ENCODE measurements at regions of chr7 and their contacts with region 1.

Region 1: GRCh38 chr7:6516387-6516983 is 34.8 kb downstream of the GRID2IP start:
- DNase-seq: peak; percentile 79
- H3K4me3 Mint-ChIP-seq: peak overlapping the region; percentile 61
- H3K27ac Mint-ChIP-seq: no peak overlapping the region
- H3K4me1 Mint-ChIP-seq: peaks cover 6% of the 10 kb centered on the region
- H3K27me3 Mint-ChIP-seq: no peaks in the 10 kb centered on the region

Region 2: GRCh38 chr7:6250364-6250833 is 266.1 kb before region 1 on chr7:
- CTCF ChIA-PET with region 1: no interaction called
- POLR2A ChIA-PET with region 1: no interaction called
- intact Hi-C with region 1: no loop called
- DNase-seq: peak; percentile 71
- H3K4me3 Mint-ChIP-seq: no peak overlapping the region
- H3K27ac Mint-ChIP-seq: peak overlapping the region; percentile 63
- H3K4me1 Mint-ChIP-seq: peaks cover 24% of the 10 kb centered on the region
- H3K27me3 Mint-ChIP-seq: peaks cover 28% of the 10 kb centered on the region

Region 3: DNA sequence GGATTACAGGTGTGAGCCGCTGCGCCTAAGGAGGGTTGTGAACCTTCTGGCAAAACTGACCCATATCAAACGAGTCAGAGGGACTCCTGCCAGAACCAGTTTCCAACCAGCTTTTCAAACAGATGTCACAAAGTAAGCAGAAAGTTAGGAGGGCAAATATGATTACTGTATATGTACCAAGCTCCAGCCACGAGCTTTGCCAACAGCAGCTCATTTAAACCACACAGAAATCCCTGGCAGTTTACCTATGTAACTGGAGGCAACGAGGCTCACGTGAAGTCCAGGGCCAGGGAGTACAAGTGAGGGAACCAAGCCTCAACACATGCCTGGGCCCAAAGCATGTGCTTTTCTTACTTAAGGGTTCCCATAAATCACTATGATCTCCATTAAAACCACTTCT is 56.2 kb before region 1 on chr7:
- CTCF ChIA-PET with region 1: no interaction called
- POLR2A ChIA-PET with region 1: no interaction called
- intact Hi-C with region 1: no loop called
- DNase-seq: no peak
- H3K4me3 Mint-ChIP-seq: no peak overlapping the region
- H3K27ac Mint-ChIP-seq: no peak overlapping the region
- H3K4me1 Mint-ChIP-seq: no peaks in the 10 kb centered on the region
- H3K27me3 Mint-ChIP-seq: no peaks in the 10 kb centered on the region

Region 4: DNA sequence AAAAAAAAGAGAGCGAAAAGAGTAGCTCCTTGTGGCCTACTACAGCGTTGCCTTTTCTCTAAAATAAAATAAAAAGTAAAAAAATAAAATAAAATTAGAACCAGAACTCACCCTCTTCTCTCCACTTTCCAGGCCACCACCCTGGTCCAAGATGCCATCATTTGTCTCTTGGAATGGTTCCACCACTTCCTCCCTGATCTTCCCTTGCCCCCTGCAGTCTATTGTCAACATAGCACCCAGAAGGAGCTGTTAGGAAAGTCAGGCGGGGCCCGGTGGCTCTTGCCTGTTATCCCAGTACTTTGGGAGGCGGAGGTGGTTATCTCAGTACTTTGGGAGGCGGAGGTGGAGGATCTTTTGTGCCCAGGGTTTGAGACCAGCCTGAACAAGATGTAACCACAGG is 42.4 kb after region 1 on chr7:
- CTCF ChIA-PET with region 1: interaction called, 24 read pairs
- POLR2A ChIA-PET with region 1: no interaction called
- intact Hi-C with region 1: loop called (anchors 1 kb)
- DNase-seq: peak; percentile 41
- H3K4me3 Mint-ChIP-seq: no peak overlapping the region
- H3K27ac Mint-ChIP-seq: no peak overlapping the region
- H3K4me1 Mint-ChIP-seq: peaks cover 8% of the 10 kb centered on the region
- H3K27me3 Mint-ChIP-seq: peaks cover 4% of the 10 kb centered on the region

Region 5: GRCh38 chr7:6577365-6578113 is 61.1 kb after region 1 on chr7 and contains the start of gene ZDHHC4:
- CTCF ChIA-PET with region 1: interaction called, 33 read pairs
- POLR2A ChIA-PET with region 1: interaction called, 4 read pairs
- intact Hi-C with region 1: no loop called
- DNase-seq: peak; percentile 93
- H3K4me3 Mint-ChIP-seq: peak within 1 kb of the TSS; percentile 84
- H3K27ac Mint-ChIP-seq: peak within 1 kb of the TSS; percentile 85
- H3K4me1 Mint-ChIP-seq: peaks cover 16% of the 10 kb centered on the region
- H3K27me3 Mint-ChIP-seq: no peaks in the 10 kb centered on the region
- total RNA-seq, gene ZDHHC4: 31.7 to 44.4 TPM